Activated CD4-positive, alpha-beta T cell treated with anti-CD3 and anti-CD28 coated beads for 36 hours (primary cell): ENCODE measurements at regions of chr10 and their contacts with region 1.

Region 1: DNA sequence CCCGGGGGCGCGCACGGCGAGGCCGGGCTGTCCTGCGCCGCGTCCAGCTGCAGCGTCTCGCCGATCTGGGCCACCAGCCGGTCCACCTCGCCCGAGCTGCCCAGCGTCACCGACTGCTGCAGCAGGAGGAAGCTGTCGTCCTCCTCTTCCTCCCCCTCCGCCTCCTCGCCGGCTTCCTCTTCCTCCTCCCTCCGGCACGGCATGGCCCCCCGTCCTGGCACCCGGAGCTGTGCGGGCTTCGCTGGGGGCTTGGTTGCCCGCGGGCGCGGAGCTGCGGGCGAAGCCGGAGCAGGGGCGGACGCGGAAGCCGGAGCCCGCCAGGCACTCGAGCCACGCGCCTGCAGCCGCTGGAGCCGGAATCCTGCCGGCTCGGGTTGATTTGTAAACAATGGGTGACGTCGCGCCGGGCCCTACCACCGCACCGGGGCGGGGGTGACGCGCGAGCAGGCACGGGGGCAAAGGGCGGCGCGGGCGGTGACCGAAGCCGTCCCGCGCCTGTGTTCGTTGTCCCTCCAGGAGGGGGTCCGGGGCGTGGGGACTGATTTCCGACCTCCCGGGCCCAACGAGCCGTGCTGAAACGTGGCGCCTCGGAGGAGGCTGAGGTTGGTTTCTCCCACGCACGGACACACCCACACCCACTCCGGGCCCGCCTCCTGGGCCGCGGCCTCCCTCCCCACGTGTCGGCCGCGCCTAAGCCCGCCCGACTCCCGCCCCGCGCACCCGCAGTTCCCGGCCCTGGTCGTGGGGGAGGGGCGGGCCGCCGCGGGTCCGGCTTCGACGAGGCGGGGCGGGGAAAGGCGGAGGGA is at the start of gene FRAT2:
- DNase-seq: peak; percentile 91
- ATAC-seq: peak; percentile 85
- H3K4me3 Mint-ChIP-seq: peak within 1 kb of the TSS; percentile 83
- H3K27ac Mint-ChIP-seq: peak within 1 kb of the TSS; percentile 86
- H3K4me1 Mint-ChIP-seq: peaks cover 40% of the 10 kb centered on the region
- H3K27me3 Mint-ChIP-seq: no peaks in the 10 kb centered on the region
- total RNA-seq, gene FRAT2: 3.0 to 4.3 TPM

Region 2: DNA sequence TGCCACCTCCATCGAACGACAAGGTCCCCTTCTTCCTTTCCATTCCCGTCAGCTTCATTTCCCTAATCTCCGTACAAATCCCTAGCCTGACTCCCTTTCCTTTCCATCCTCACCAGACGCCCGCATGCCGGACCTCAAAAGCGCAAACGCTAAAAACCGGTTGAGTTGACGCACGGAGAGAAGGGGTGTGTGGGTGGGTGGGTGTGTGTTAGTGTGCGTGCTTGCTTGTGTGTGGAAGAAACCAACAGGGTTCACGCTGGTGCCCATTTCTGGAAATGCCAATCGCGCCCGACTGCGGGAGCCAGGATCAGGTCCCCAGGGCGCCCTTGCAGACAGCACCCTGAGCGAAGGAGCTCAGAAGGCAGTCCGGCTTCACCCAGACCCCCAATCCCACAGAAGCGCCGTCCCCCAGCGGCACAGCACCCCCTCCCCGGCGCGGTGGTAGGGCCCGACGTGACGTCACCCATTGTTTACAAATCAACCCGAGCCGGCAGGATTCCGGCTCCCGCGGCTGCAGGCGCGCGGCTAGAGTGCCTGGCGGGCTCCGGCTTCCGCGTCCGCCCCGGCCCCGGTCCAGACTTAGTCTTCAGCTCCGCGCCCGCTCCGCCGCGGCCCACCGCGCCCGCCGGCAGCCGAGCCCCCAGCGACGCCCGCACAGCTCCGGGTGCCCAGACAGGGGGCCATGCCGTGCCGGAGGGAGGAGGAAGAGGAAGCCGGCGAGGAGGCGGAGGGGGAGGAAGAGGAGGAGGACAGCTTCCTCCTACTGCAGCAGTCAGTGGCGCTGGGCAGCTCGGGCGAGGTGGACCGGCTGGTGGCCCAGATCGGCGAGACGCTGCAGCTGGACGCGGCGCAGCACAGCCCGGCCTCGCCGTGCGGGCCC is 15.6 kb before region 1 on chr10 and contains the start of gene FRAT1:
- CTCF ChIA-PET with region 1: interaction called, 22 read pairs
- POLR2A ChIA-PET with region 1: interaction called, 27 read pairs
- intact Hi-C with region 1: loop called (anchors 1 kb)
- DNase-seq: peak; percentile 92
- ATAC-seq: peak; percentile 64
- H3K4me3 Mint-ChIP-seq: peak within 1 kb of the TSS; percentile 91
- H3K27ac Mint-ChIP-seq: peak within 1 kb of the TSS; percentile 99
- H3K4me1 Mint-ChIP-seq: peaks cover 29% of the 10 kb centered on the region
- H3K27me3 Mint-ChIP-seq: no peaks in the 10 kb centered on the region
- total RNA-seq, gene FRAT1: 1.3 to 1.8 TPM

Region 3: GRCh38 chr10:97640174-97640867 is 305.7 kb after region 1 on chr10 and contains the start of gene PI4K2A:
- CTCF ChIA-PET with region 1: no interaction called
- POLR2A ChIA-PET with region 1: no interaction called
- intact Hi-C with region 1: loop called in 1 of 2 experiments (anchors 2 kb)
- DNase-seq: peak; percentile 100
- ATAC-seq: peak; percentile 99
- H3K4me3 Mint-ChIP-seq: peak within 1 kb of the TSS; percentile 97
- H3K27ac Mint-ChIP-seq: peak within 1 kb of the TSS; percentile 93
- H3K4me1 Mint-ChIP-seq: peaks cover 18% of the 10 kb centered on the region
- H3K27me3 Mint-ChIP-seq: no peaks in the 10 kb centered on the region
- total RNA-seq, gene PI4K2A: 8.5 to 8.9 TPM